ENCODE measurements at regions of chr17 and their contacts with region 1.

Region 1: DNA sequence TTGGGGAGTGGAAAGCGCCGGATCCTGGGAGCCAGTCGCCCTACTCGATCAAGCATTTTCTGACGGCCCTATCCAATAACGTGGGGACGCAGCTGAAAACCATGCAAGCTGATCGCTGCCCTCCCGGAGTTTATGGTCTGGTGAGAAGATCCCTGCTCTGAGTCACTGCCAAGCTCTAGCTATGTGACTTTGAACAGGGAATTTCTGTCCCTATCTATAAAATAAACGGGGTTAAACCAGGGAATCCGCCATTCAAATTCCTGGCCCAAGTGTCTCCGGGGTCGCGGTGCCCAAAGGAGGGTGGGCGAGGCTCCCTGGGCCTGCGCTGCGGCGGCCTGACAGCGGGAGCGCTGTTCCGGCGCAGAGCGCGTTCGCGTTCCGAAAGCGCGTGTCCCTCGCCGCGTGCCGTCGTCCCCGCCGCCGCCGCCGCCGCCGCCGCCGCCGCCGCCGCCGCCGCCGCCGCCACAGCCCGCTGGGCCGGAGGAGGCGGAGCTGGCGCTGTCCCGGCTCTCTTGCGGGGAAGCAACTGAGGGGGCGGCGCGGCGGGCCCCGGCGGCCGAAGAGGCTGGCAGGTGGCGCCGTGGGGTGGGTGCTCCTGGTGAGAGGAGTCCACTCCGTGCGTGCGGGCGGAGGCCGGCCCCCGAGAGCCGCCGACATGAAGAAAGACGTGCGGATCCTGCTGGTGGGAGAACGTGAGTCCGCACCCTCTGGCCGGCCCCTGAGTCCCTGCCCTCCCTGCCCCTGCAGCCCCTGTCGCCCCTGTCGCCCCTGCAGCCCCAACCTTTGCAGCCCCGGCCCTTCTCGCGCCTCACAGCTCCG is at the start of gene RHOT1:
- DNase-seq: peak; percentile 85
- ATAC-seq: peak; percentile 64
- H3K4me3 Mint-ChIP-seq: peak within 1 kb of the TSS; percentile 99
- H3K27ac Mint-ChIP-seq: peak within 1 kb of the TSS; percentile 67
- H3K4me1 Mint-ChIP-seq: peaks cover 27% of the 10 kb centered on the region
- H3K27me3 Mint-ChIP-seq: no peaks in the 10 kb centered on the region
- total RNA-seq, gene RHOT1: 23.3 to 34.1 TPM

Region 2: GRCh38 chr17:31558748-31559644 is 583.3 kb before region 1 on chr17:
- CTCF ChIA-PET with region 1: no interaction called
- POLR2A ChIA-PET with region 1: no interaction called
- intact Hi-C with region 1: loop called in 1 of 2 experiments (anchors 5 kb)
- DNase-seq: peak; percentile 75
- ATAC-seq: peak; percentile 83
- H3K4me3 Mint-ChIP-seq: peak overlapping the region; percentile 59
- H3K27ac Mint-ChIP-seq: no peak overlapping the region
- H3K4me1 Mint-ChIP-seq: peaks cover 18% of the 10 kb centered on the region
- H3K27me3 Mint-ChIP-seq: peaks cover 5% of the 10 kb centered on the region

Region 3: DNA sequence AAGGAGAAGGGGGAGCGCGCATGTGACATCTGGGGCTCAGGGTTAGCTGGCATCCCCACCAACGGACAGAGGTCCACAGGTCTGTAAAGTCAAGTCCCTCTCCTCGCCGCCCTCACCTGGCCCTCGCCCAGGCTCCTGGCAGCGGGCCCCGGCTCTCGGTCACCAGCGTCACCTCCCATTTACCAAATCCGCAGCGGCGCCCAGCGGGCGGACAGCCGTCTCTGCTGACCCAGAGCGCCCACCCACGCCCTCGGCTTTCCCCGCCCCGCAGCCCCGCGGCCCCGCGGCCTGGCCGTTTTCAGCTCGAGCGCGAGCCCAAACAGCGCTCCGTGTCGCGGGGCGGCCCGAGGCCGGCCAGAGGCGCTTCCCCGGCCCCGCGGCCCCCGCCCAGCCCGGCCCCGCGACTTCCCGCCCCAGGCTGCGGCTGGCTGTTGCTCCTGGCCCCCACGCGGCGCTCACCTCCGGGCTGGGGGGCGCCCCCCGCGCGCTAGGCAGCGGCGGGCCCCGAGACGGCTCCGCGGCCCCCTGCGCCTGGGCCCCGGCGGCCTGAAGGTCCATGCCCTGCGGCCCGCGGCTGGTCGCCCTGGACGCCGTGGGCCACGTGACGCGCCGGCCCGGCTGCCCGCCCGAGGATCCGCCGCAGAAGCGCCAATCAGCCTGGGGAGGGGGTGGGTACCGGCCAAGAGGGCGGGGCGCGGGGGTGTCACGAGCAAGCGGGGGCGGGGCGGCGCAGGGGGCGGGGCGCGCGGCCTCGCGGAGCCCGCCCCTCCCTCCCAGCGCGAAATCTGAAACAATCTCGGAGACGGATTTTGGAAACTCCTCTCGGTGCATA is 283.4 kb before region 1 on chr17 and contains the start of gene COPRS:
- CTCF ChIA-PET with region 1: no interaction called
- POLR2A ChIA-PET with region 1: no interaction called
- intact Hi-C with region 1: loop called in 1 of 2 experiments (anchors 1 kb)
- DNase-seq: peak; percentile 91
- ATAC-seq: peak; percentile 77
- H3K4me3 Mint-ChIP-seq: peak within 1 kb of the TSS; percentile 84
- H3K27ac Mint-ChIP-seq: peak within 1 kb of the TSS; percentile 86
- H3K4me1 Mint-ChIP-seq: peaks cover 19% of the 10 kb centered on the region
- H3K27me3 Mint-ChIP-seq: no peaks in the 10 kb centered on the region
- total RNA-seq, gene COPRS: 35.0 to 41.3 TPM

Region 4: DNA sequence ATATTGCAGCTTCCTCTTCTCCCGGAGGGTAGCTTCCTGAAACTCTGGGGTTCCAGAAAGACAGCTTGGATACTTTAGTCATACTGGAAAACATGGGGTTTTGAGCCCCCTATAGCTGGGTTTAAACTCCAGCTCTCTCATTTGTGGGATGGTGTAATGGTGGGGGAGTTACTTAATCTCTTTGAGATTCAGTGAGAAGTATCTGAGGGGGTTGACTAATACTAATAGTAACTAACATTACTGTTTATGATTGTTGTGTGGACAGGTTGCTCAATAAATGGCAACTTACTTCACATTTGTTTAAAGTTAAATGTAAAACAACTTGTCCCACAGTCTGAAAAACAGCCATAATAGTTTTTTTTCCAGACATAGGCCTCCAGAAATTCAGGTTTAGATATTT is 210.5 kb before region 1 on chr17:
- CTCF ChIA-PET with region 1: no interaction called
- POLR2A ChIA-PET with region 1: no interaction called
- intact Hi-C with region 1: loop called in 1 of 2 experiments (anchors 2 kb)
- DNase-seq: no peak
- ATAC-seq: no peak
- H3K4me3 Mint-ChIP-seq: no peak overlapping the region
- H3K27ac Mint-ChIP-seq: no peak overlapping the region
- H3K4me1 Mint-ChIP-seq: peaks cover 7% of the 10 kb centered on the region
- H3K27me3 Mint-ChIP-seq: no peaks in the 10 kb centered on the region

Region 5: DNA sequence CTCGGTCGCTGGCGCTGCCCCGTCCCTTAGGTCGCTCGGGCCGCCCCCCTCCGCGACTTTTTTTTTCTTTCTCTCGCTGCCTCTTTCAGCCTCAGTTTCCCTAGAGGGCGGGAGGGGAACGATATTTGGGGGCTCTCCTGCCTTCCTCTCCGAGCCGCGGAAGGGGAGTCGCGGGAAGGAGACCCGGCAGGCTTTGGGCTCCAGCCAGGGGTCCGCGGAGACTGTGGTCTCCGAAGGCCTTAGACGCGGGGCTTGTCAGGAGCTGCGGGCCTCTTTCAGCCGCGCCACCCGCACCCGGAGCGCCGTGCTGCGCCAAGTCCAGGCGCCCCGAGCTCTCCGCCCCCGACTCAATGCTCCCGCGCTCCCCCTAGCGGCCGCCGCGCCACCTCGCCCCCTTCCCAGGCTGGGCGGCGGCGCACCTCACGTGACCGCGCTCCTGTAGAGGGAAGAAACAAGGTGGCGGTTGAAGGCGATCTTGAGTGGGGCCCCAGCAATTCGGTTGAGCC is 135.2 kb before region 1 on chr17 and contains the start of gene LRRC37B:
- CTCF ChIA-PET with region 1: interaction called, 14 read pairs
- POLR2A ChIA-PET with region 1: no interaction called
- intact Hi-C with region 1: loop called (anchors 1 to 2 kb)
- DNase-seq: peak; percentile 94
- ATAC-seq: peak; percentile 91
- H3K4me3 Mint-ChIP-seq: peak within 1 kb of the TSS; percentile 86
- H3K27ac Mint-ChIP-seq: peak within 1 kb of the TSS; percentile 90
- H3K4me1 Mint-ChIP-seq: peaks cover 26% of the 10 kb centered on the region
- H3K27me3 Mint-ChIP-seq: no peaks in the 10 kb centered on the region
- total RNA-seq, gene LRRC37B: 14.3 to 16.6 TPM

Region 6: GRCh38 chr17:32127158-32127897 is 14.9 kb before region 1 on chr17:
- CTCF ChIA-PET with region 1: interaction called, 60 read pairs
- POLR2A ChIA-PET with region 1: no interaction called
- intact Hi-C with region 1: loop called in 1 of 2 experiments (anchors 1 kb)
- DNase-seq: peak; percentile 91
- ATAC-seq: peak; percentile 99
- H3K4me3 Mint-ChIP-seq: peak overlapping the region; percentile 96
- H3K27ac Mint-ChIP-seq: peak overlapping the region; percentile 99
- H3K4me1 Mint-ChIP-seq: peaks cover 15% of the 10 kb centered on the region
- H3K27me3 Mint-ChIP-seq: no peaks in the 10 kb centered on the region

Region 7: GRCh38 chr17:32341857-32342602 is 199.8 kb after region 1 on chr17 and contains the start of gene C17orf75:
- CTCF ChIA-PET with region 1: interaction called, 4 read pairs
- POLR2A ChIA-PET with region 1: no interaction called
- intact Hi-C with region 1: loop called in 1 of 2 experiments (anchors 2 kb)
- DNase-seq: peak; percentile 90
- ATAC-seq: peak; percentile 94
- H3K4me3 Mint-ChIP-seq: peak within 1 kb of the TSS; percentile 88
- H3K27ac Mint-ChIP-seq: peak within 1 kb of the TSS; percentile 96
- H3K4me1 Mint-ChIP-seq: peaks cover 17% of the 10 kb centered on the region
- H3K27me3 Mint-ChIP-seq: no peaks in the 10 kb centered on the region
- total RNA-seq, gene C17orf75: 21.9 to 34.0 TPM